ENCODE measurements at regions of chr9 and their contacts with region 1.

Region 1: GRCh38 chr9:34646211-34647083 is at the start of gene GALT:
- DNase-seq: peak; percentile 95 to 96
- ATAC-seq: peak; percentile 93 to 96 (median 94)
- H3K4me3 ChIP-seq: peak within 1 kb of the TSS; percentile 69
- H3K4me3 Mint-ChIP-seq: peak within 1 kb of the TSS; percentile 89
- H3K27ac ChIP-seq: peak within 1 kb of the TSS; percentile 53
- H3K27ac Mint-ChIP-seq: peak within 1 kb of the TSS; percentile 77 to 89
- H3K4me1 ChIP-seq: peaks cover 24% of the 10 kb centered on the region
- H3K4me1 Mint-ChIP-seq: peaks cover 22 to 26% of the 10 kb centered on the region in 2 donors
- H3K27me3 ChIP-seq: no peaks in the 10 kb centered on the region
- H3K27me3 Mint-ChIP-seq: no peaks in the 10 kb centered on the region
- CTCF ChIP-seq: peak; percentile 46
- total RNA-seq, gene GALT: 81.9 to 118 (median 89.3) TPM

Region 2: DNA sequence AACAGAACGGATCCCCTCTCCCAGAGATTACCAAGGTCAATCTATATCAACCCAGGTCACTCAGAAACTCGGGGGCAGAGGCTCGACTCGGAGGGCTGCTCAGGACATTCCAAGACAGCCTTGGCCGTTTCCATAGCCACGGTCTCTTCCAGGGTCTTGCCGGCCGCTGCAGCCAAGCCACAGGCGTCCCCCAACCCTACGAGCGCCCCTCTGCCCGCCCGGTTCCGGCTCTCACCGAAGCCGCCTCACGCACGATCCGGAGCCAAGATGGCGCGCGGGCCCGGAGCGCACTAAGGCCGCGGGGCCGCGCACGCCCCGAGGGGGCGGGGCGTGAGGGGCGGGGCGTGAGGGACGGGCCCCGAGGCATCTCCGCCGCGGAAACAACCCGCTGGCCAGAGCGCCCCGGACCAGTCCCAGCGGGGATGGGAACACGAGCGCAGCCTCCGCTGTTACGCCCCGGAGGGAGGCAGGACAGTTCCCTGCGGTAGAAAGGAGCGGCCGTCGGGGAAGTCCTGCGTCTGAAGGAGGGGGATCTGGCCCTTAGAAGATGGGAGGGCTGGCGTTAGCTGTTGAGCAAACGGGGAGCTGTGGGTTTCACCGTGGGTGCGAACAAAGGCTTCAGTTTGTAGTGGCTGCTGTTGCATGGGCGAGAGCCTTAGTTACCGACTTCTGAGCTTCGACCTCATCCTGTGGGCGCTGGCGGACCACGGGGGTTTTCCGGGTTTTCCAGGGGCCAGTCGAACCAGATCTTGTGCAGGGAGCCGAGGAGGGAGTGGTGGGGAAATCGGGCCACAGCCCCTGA is 34.4 kb before region 1 on chr9 and contains the start of gene RPP25L:
- intact Hi-C with region 1: loop called (anchors 5 kb)
- DNase-seq: peak; percentile 91 to 93
- ATAC-seq: peak; percentile 85 to 97 (median 89)
- H3K4me3 ChIP-seq: peak within 1 kb of the TSS; percentile 72
- H3K4me3 Mint-ChIP-seq: peak within 1 kb of the TSS; percentile 92
- H3K27ac ChIP-seq: peak within 1 kb of the TSS; percentile 96
- H3K27ac Mint-ChIP-seq: peak within 1 kb of the TSS; percentile 92 to 96
- H3K4me1 ChIP-seq: peaks cover 24% of the 10 kb centered on the region
- H3K4me1 Mint-ChIP-seq: peaks cover 29 to 36% of the 10 kb centered on the region in 2 donors
- H3K27me3 ChIP-seq: no peaks in the 10 kb centered on the region
- H3K27me3 Mint-ChIP-seq: no peaks in the 10 kb centered on the region
- CTCF ChIP-seq: no peak
- total RNA-seq, gene RPP25L: 9.3 to 15.0 (median 9.8) TPM

Region 3: GRCh38 chr9:34665381-34666250 is 19.2 kb after region 1 on chr9:
- intact Hi-C with region 1: loop called (anchors 1 kb)
- DNase-seq: peak; percentile 82 to 97
- ATAC-seq: peak; percentile 85 to 93 (median 86)
- H3K4me3 ChIP-seq: peak overlapping the region; percentile 70
- H3K4me3 Mint-ChIP-seq: peak overlapping the region; percentile 90
- H3K27ac ChIP-seq: peak overlapping the region; percentile 96
- H3K27ac Mint-ChIP-seq: peak overlapping the region; percentile 86 to 92
- H3K4me1 ChIP-seq: peaks cover 24% of the 10 kb centered on the region
- H3K4me1 Mint-ChIP-seq: peaks cover 11 to 26% of the 10 kb centered on the region in 2 donors
- H3K27me3 ChIP-seq: no peaks in the 10 kb centered on the region
- H3K27me3 Mint-ChIP-seq: no peaks in the 10 kb centered on the region
- CTCF ChIP-seq: no peak